Heart left ventricle (tissue), 16 donors: ENCODE measurements at regions of chr3 and their contacts with region 1.

Region 1: GRCh38 chr3:58135712-58136543 is 74.8 kb downstream of the DNASE1L3 start:
- DNase-seq: peak; percentile 47 to 86 (median 65)
- ATAC-seq: peak; percentile 65 to 93 (median 88)
- H3K4me3 ChIP-seq: no peak overlapping the region
- H3K27ac ChIP-seq: peak overlapping the region in 10 of 12 donors; percentile 6 to 81 (median 49)
- H3K4me1 ChIP-seq: peaks cover 0 to 13% (median 0%) of the 10 kb centered on the region in 12 donors
- H3K27me3 ChIP-seq: no peaks in the 10 kb centered on the region
- CTCF ChIP-seq: peak in 9 of 12 donors; percentile 8 to 46 (median 23)
- POLR2A ChIP-seq: no peak

Region 2: DNA sequence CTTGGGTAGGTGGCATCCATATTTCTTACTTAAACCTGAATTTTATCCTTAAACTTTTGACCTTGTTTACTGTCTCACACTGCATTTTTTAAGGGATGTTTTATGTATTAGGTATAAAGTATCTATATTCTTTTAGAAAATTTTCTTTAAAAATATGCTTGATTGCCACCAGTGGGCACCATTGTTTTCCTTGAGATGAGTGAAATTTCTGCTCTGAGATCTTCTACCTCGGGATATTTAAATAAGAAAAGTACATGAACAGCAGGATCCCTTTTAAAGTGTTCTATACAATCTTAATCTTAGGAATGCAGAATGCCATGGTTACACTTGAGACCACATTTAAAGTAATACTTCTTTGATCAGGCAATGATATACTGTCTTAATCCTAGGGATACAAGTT is 271.1 kb before region 1 on chr3:
- intact Hi-C with region 1: loop called in 1 of 10 experiments (anchors 10 kb)
- DNase-seq: no peak
- ATAC-seq: no peak
- H3K4me3 ChIP-seq: no peak overlapping the region
- H3K27ac ChIP-seq: no peak overlapping the region
- H3K4me1 ChIP-seq: no peaks in the 10 kb centered on the region
- H3K27me3 ChIP-seq: no peaks in the 10 kb centered on the region
- CTCF ChIP-seq: peak in 11 of 12 donors; percentile 10 to 57 (median 35)
- POLR2A ChIP-seq: no peak

Region 3: GRCh38 chr3:58260261-58260731 is 124.4 kb after region 1 on chr3:
- intact Hi-C with region 1: no loop called
- DNase-seq: no peak
- ATAC-seq: no peak
- H3K4me3 ChIP-seq: no peak overlapping the region
- H3K27ac ChIP-seq: no peak overlapping the region
- H3K4me1 ChIP-seq: no peaks in the 10 kb centered on the region
- H3K27me3 ChIP-seq: no peaks in the 10 kb centered on the region
- CTCF ChIP-seq: no peak
- POLR2A ChIP-seq: no peak